ENCODE measurements at regions of chr9 and their contacts with region 1.

Region 1: GRCh38 chr9:96217754-96218693 is 84.0 kb downstream of the HSD17B3 start:
- DNase-seq: peak; percentile 58 to 95 (median 74)

Region 2: GRCh38 chr9:95510709-95511615 is 707.1 kb before region 1 on chr9:
- intact Hi-C with region 1: loop called (anchors 5 kb)
- DNase-seq: peak; percentile 80 to 98 (median 87)

Region 3: GRCh38 chr9:95726756-95727155 is 491.3 kb before region 1 on chr9:
- intact Hi-C with region 1: loop called (anchors 2 kb)
- DNase-seq: no peak

Region 4: DNA sequence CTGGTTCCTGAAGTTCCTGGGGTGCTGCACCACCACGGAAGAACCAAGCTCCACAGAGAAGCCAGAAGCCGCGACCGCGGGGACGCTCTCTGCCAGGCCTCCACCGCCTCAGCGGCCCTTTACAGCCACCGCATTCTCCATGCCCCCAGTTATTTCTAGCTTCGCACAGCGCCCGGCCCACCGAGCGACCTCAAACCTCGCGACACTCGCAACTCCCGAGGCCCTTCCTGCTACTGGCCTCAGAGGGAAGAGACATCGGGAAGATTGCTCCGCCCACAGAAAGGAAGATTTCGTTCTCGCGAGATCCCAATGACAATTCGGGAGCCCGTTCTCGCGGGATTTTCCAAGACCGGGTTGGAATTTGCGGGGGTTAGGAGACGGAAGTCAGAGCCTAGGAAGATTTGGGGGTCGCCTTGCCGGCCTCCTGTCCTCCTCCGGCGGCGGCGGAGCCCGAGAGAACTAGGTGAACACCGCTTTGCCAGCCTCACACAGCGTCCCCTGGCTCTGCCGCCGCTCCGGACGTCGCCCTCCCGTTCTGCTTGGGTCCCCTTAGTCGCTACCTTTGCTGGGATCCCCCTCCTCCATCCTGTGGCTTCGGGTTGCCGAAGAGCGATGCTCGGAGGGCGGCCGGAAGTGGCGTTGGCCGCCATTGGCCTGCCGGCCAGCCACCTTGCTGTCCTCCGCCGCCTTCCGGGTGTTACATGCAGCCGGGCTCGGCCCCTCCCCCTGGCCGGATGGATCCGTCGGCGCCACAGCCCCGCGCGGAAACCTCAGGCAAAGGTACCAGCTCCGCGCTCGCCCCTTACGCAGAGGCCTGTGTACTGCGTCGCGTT is 342.5 kb before region 1 on chr9 and contains the start of gene ERCC6L2:
- intact Hi-C with region 1: loop called (anchors 2 kb)
- DNase-seq: peak; percentile 85 to 98 (median 90)

Region 5: GRCh38 chr9:96048104-96048955 is 169.7 kb before region 1 on chr9:
- intact Hi-C with region 1: loop called (anchors 10 kb)
- DNase-seq: peak in 2 of 10 donors; percentile 31 to 84

Region 6: DNA sequence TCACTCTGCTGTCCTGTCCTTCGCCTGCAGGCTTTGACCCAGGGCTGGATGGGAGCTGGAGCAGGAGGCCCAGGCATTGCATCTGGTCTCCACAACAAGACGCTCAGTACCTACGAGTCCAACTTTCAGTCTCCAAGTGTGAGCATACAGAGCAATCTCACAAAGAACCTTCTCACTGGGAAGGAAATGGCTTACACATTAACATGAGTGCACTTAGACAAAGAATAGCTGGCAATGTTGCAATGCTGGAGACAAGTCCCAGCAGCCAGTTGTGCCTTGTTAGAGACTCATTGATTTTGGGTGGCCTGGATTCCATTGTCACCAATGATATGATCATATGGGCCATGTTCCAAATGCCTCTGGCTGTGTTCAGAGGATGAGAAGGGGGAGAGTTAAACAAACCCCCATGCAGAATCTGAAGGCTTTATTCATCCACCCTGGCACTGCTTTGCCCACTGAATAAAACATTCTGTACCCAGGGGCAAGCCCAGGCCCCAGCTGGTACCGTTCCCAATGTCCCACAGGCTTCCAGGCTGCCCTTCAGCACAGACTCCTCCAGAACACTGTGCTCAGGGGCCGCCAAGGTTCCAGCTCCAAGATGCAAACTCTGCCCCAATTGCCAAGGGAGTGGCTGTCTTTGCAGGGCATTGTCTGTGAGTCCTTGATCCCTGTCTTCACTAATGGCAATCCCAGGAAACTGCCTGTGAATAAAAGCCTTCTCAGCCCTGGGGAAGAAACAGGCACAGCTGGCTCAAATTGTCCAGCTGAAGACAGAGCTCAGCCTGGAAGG is 101.6 kb before region 1 on chr9:
- intact Hi-C with region 1: loop called (anchors 1 kb)
- DNase-seq: peak; percentile 80 to 98 (median 88)